Right ventricle myocardium superior (tissue), 1 donor: ENCODE measurements at regions of chr11 and their contacts with region 1.

Region 1: GRCh38 chr11:101456812-101457211 is 127.0 kb downstream of the TRPC6 start:
- DNase-seq: no peak
- ATAC-seq: no peak

Region 2: GRCh38 chr11:101401245-101401644 is 55.6 kb before region 1 on chr11:
- intact Hi-C with region 1: no loop called
- DNase-seq: no peak
- ATAC-seq: no peak

Region 3: DNA sequence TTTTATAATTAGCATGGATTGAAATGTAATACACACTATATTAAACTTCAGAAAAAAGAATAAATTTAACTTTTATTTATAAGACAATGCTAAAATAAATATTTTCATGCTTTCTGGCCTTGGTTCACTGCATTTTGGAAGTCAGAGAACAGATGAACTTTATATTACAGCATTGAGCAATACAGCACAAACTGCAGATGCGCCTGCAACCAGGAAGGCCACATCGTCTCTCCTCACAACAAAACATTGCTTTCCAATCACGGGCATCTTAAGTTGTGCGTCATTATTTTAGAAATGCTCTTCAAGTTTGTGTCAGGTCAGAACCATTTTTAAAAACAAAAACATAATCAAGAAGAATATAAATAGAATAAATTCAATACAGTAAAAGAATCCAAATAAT is 368.7 kb after region 1 on chr11:
- intact Hi-C with region 1: no loop called
- DNase-seq: no peak
- ATAC-seq: no peak

Region 4: DNA sequence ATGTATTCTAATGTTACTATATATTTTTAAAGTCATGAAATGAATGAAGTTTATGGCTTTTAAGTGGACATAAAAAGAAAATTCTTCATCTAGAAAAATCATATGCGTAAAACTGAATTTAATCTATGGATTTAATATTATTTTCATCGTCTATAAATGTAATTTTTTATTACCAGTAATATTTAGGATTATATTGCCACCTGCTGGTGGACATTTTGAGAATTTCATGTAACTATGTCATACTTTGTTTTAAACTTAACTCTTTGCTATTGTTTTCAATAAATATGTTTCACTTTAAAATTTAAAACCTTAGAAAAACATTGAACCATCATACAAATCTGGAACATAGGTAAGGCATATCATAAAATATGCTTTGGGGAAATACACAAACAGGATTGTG is 391.4 kb after region 1 on chr11:
- intact Hi-C with region 1: loop called (anchors 10 kb)
- DNase-seq: no peak
- ATAC-seq: no peak